Psoas muscle (tissue), 8 donors: ENCODE measurements at regions of chr1 and their contacts with region 1.

Region 1: DNA sequence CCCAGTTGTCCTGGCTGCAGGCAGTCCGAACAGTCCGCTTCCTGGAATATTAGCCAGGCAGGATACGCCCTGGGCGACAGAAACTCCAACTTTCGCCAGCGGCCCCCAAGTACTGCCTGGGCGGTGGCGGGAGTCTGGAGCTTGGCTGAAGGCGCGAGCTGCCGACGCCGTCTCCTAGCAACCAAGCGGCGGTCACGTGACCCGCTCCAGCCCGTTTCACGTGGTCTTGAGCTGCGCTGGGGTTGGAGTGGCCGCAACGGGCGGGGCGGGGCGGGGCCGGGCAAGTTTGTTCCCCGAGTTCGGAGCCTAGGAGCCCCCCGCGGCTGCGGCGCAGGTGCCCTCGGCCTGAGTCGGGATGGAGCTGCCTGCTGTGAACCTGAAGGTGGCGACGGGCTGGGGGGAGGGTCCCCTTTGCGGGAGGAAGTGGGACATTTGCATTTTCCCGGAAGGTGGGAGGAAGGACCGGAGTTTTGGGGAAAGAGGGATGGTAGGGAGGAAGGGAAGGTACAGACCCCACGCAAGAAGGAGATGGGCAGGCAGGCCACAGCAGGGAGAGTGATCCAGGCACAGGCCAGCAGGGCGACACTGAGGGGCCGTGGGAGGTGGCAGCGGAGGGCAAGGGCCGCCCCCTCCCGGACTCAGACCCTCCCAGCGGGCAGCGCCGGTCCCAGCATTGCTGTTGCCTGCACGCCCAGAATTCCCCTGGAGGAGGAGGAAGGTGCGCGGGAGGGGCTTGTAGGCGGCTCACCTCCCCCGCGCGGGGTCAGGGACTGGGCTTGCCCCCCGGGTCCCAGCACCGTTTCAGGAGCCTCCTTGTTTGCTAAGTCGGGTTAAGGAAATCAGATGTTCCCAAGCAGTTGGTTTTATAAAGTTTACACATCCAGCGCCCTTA is at the start of gene AGTRAP:
- DNase-seq: peak; percentile 97 to 99
- ATAC-seq: peak; percentile 77 to 89 (median 84)
- H3K4me3 ChIP-seq: peak within 1 kb of the TSS; percentile 72
- H3K27ac ChIP-seq: peak within 1 kb of the TSS; percentile 87
- H3K4me1 ChIP-seq: peaks cover 17% of the 10 kb centered on the region
- H3K27me3 ChIP-seq: no peaks in the 10 kb centered on the region
- CTCF ChIP-seq: no peak
- total RNA-seq, gene AGTRAP: 28.5 to 46.0 (median 42.2) TPM

Region 2: GRCh38 chr1:11272832-11273594 is 463.1 kb before region 1 on chr1 and contains the start of gene UBIAD1:
- intact Hi-C with region 1: loop called in 1 of 2 experiments (anchors 10 kb)
- DNase-seq: peak; percentile 88 to 93
- ATAC-seq: peak; percentile 91 to 95 (median 94)
- H3K4me3 ChIP-seq: peak within 1 kb of the TSS; percentile 76
- H3K27ac ChIP-seq: peak within 1 kb of the TSS; percentile 98
- H3K4me1 ChIP-seq: peaks cover 28% of the 10 kb centered on the region
- H3K27me3 ChIP-seq: no peaks in the 10 kb centered on the region
- CTCF ChIP-seq: no peak
- total RNA-seq, gene UBIAD1: 21.9 to 29.4 (median 26.7) TPM

Region 3: DNA sequence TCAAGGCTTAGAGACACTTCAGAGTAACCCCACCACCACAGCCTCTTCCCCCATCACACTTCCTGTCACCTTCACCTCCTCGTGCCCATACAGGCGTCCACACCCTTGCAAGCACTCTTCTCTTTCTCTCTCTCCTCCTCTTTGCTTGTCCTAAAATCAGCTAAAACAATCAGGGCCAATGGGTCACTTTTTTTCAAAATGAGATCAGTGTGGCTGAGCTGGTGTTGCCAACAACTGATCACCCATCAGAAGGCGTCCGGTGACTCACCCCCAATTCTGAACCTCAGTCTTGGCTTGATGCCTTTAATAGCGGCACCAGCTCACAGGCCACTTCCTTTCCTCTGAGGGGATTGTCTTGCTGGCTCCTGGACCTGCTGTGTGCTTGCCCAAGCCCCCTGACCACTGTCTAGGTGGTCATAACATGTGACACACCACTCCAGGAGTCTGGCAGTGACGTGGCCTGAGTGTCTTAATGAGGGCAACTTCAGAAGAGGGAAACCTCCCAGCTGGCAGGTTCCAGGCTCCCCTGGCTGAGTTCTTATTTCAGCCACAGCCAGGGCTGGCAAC is 43.0 kb before region 1 on chr1:
- intact Hi-C with region 1: no loop called
- DNase-seq: peak in 1 of 2 donors; percentile 35
- ATAC-seq: peak in 3 of 4 donors; percentile 59 to 65 (median 61)
- H3K4me3 ChIP-seq: no peak overlapping the region
- H3K27ac ChIP-seq: no peak overlapping the region
- H3K4me1 ChIP-seq: no peaks in the 10 kb centered on the region
- H3K27me3 ChIP-seq: peaks cover 0 to 57% (median 23%) of the 10 kb centered on the region in 3 donors
- CTCF ChIP-seq: no peak

Region 4: GRCh38 chr1:11784993-11785769 is 49.1 kb after region 1 on chr1:
- intact Hi-C with region 1: loop called in 1 of 2 experiments (anchors 5 kb)
- DNase-seq: peak; percentile 78 to 88
- ATAC-seq: peak; percentile 52 to 71 (median 63)
- H3K4me3 ChIP-seq: peak overlapping the region; percentile 55
- H3K27ac ChIP-seq: peak overlapping the region; percentile 41
- H3K4me1 ChIP-seq: peaks cover 51% of the 10 kb centered on the region
- H3K27me3 ChIP-seq: no peaks in the 10 kb centered on the region
- CTCF ChIP-seq: peak; percentile 82